Ascending aorta (tissue), 2 donors: ENCODE measurements at regions of chr4 and their contacts with region 1.

Region 1: GRCh38 chr4:89024051-89024675 is 32.8 kb downstream of the FAM13A start:
- DNase-seq: peak in 1 of 2 donors; percentile 77
- H3K4me3 ChIP-seq: no peak overlapping the region
- H3K27ac ChIP-seq: no peak overlapping the region
- H3K4me1 ChIP-seq: no peaks in the 10 kb centered on the region
- H3K27me3 ChIP-seq: no peaks in the 10 kb centered on the region
- CTCF ChIP-seq: peak; percentile 71 to 85 (median 81)

Region 2: GRCh38 chr4:88646528-88647280 is 377.5 kb before region 1 on chr4:
- intact Hi-C with region 1: no loop called
- DNase-seq: no peak
- H3K4me3 ChIP-seq: no peak overlapping the region
- H3K27ac ChIP-seq: no peak overlapping the region
- H3K4me1 ChIP-seq: no peaks in the 10 kb centered on the region
- H3K27me3 ChIP-seq: no peaks in the 10 kb centered on the region
- CTCF ChIP-seq: no peak

Region 3: DNA sequence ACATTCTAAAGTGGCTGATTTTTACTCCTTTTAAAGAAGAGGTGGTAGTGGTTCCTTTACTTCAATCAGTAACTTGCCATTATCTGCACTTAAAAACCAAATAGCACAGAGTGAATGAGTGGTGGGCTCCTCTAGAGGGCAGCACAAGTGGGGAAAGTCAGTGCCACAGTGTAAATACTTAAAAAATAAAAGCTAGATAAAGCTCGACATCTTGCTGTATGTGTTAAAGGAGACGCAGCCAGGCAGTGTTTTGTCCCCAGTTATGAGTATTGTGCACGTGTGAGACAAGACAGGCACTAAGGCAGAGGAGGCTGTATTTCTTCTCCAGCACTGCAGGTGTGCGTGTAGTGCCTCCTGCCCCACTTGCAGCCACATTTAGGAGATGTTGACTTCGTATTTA is 351.2 kb before region 1 on chr4:
- intact Hi-C with region 1: loop called (anchors 10 kb)
- DNase-seq: no peak
- H3K4me3 ChIP-seq: no peak overlapping the region
- H3K27ac ChIP-seq: no peak overlapping the region
- H3K4me1 ChIP-seq: no peaks in the 10 kb centered on the region
- H3K27me3 ChIP-seq: no peaks in the 10 kb centered on the region
- CTCF ChIP-seq: peak in 2 of 3 experiments; percentile 40 to 50